Activated CD4-positive, alpha-beta T cell treated with anti-CD3 and anti-CD28 coated beads for 36 hours (primary cell): ENCODE measurements at regions of chr7 and their contacts with region 1.

Region 1: GRCh38 chr7:123635551-123636359 is 19.9 kb upstream of the LMOD2 start:
- DNase-seq: no peak
- ATAC-seq: no peak
- H3K4me3 Mint-ChIP-seq: no peak overlapping the region
- H3K27ac Mint-ChIP-seq: no peak overlapping the region
- H3K4me1 Mint-ChIP-seq: no peaks in the 10 kb centered on the region
- H3K27me3 Mint-ChIP-seq: peaks cover 21% of the 10 kb centered on the region

Region 2: DNA sequence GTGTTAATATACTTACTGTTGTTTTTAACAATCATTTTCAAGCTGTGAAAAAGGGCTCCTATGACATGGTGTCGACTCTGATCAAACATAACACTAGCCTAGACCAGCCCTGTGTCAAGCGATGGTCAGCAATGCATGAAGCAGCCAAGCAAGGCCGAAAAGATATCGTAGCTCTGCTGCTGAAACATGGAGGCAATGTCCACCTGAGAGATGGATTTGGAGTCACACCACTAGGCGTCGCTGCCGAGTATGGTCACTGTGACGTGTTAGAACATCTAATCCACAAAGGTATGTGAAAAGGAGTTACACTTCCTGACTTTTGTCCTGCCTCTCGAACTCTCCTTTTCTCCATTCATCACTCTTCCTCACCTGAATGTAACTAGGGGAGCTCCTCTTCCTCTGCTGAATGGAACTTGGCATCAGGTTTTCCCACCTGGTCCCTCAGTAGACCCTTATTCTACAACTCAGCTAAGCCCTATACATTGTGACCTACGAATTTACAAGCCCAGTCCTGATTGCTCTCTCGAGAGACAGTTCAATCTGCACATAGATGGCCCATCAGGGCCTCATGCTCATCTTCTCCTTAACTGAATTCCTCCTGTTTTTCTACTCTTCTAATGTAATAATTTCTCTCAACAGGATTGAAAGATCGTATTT is 11.1 kb before region 1 on chr7:
- CTCF ChIA-PET with region 1: interaction called, 13 read pairs
- POLR2A ChIA-PET with region 1: no interaction called
- intact Hi-C with region 1: no loop called
- DNase-seq: peak; percentile 85
- ATAC-seq: peak; percentile 65
- H3K4me3 Mint-ChIP-seq: no peak overlapping the region
- H3K27ac Mint-ChIP-seq: no peak overlapping the region
- H3K4me1 Mint-ChIP-seq: no peaks in the 10 kb centered on the region
- H3K27me3 Mint-ChIP-seq: peaks cover 5% of the 10 kb centered on the region

Region 3: DNA sequence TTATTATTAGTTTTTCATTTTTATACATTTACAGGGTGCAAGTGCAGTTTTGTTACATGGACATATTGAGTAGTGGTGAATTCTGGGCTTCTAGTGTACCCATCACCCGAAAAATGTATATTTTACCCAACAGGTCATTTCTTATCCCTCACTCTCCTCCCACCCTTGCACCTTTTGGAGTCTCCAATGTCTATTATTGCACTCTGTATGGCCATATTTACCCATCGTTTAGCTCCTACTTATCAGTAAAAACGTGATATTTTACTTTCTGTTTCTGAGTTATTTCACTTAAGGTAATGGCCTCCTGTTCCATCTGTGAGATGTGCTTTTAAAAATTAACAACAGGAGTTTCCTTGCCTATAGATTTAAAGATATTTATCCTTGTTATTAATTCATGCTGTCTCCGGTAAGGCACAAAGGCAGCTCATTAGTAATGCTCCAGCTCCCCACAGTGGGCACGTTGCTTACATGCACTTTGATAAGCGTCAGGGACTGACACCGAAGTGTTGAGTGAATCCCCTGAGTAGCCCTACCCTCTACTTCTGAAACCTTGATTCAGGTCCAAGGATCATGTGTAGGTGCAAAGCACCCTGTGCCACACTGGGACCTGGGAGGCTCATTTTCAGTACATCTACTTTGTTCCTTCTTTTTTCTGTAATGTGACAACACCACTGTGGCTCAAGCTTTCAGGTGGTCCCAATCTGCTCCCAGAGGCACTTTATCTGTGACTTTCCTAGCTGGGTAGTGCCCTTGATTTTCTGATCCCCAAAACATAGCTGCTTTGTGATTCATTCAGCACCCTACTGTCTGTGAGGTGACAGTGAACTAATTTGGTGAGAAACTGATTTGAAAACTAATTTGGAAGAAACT is 236.5 kb after region 1 on chr7:
- CTCF ChIA-PET with region 1: interaction called, 6 read pairs
- POLR2A ChIA-PET with region 1: no interaction called
- intact Hi-C with region 1: loop called (anchors 1 to 5 kb)
- DNase-seq: peak; percentile 65
- ATAC-seq: peak; percentile 82
- H3K4me3 Mint-ChIP-seq: no peak overlapping the region
- H3K27ac Mint-ChIP-seq: no peak overlapping the region
- H3K4me1 Mint-ChIP-seq: peaks cover 3% of the 10 kb centered on the region
- H3K27me3 Mint-ChIP-seq: peaks cover 4% of the 10 kb centered on the region